Posterior cingulate gyrus (tissue), 11 donors: ENCODE measurements at regions of chr1 and their contacts with region 1.

Region 1: DNA sequence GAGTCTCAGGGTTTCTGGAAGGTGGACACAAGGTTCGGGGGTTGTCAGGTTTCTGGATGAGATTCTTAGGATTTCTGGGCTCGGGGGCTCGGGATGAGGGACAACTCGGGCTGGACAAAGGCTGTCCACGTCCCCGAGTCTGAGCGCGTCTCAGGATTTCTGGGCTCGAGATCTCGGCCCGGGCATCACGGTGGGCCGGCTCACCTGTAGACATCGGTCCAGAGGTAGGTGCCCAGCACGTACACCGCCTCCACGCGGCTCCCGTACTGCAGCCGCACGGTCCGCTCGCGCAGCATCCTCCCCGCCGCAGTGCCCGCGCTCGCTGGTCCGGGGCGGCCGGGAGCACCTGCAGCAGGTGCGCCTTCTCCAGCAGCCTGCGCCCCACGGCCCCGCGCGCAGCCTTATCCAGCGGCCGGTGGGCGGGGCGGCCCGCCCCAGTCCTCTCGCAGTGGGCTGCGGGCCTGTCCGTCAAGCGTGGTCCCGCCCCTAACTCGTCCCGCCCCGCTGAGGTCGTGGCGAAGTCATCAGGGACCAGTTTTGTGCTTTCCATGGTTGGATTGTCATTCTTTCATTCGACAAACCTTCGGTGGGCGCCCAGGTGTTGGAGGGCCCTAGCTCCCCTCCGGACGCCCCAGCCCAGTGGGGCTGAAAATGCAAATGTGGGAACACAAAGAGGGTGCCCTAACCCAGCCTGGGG is at the start of gene PADI2:
- DNase-seq: peak; percentile 76 to 98 (median 89)

Region 2: DNA sequence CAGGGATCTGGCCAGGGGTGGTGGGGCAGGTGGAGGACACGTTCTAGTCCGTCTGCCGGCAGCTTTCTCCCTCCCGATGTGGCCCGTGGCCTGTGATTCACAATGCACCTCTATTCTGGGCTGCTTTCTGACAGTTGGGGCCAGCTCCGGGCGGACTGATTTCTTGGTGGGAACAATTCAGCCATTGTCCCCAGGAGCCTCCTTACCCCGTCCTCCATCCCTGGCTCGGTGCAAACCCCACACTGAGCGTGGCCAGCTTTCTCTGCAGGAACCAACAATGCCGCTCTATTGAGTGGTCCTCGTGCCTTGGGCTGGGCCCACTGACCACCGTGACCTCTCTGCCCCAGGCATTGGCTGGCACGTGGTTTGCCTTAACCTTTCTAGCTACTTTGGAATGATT is 29.7 kb before region 1 on chr1:
- intact Hi-C with region 1: loop called (anchors 2 kb)
- DNase-seq: peak; percentile 77 to 97 (median 88)

Region 3: GRCh38 chr1:17653728-17654351 is 534.6 kb after region 1 on chr1:
- intact Hi-C with region 1: no loop called
- DNase-seq: peak; percentile 44 to 95 (median 68)